ENCODE measurements at regions of chr17 and their contacts with region 1.

Region 1: GRCh38 chr17:7656958-7657609 is 6.4 kb downstream of the ATP1B2 start:
- DNase-seq: no peak
- H3K4me3 ChIP-seq: no peak overlapping the region
- H3K27ac ChIP-seq: no peak overlapping the region
- H3K4me1 ChIP-seq: no peaks in the 10 kb centered on the region
- H3K27me3 ChIP-seq: peaks cover 11% of the 10 kb centered on the region
- CTCF ChIP-seq: no peak

Region 2: DNA sequence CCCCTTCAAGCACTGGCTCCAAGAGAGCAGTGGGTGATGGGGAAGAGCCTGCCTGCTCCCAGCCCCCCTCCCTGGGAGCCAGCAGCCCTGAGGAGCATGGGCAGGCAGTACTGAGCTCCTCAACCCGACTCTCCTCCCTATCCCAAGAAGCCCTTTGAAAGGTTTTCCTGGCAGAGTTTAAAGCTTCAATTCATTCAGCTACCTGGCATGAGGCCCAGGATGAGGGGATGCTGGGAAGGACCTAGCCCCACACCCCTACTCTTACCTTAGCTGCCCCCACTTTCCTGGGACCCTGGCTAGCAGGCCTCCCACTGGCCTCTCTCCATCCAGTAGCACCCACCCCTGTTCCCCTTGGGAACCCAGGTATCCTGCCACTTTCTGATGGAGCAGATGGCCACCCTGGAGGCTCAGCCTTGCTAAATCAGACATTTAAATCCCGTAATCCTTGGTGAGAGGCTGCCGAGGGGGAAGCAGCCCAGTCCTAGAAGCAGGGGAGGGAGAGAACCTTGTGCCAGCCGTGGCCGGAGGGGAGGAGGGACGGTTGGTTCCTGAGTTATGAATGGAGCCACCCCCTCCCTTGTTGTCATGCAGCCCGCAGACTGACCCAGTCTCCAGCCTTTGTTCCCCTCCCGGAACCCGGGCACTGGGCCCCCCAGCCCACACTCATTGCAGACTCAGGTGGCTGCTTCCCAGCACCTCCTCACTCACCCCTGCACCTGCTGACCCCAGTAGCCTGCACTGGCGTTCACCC is 10.7 kb after region 1 on chr17:
- CTCF ChIA-PET with region 1: no interaction called
- POLR2A ChIA-PET with region 1: interaction called, 19 read pairs
- intact Hi-C with region 1: no loop called
- DNase-seq: no peak
- H3K4me3 ChIP-seq: no peak overlapping the region
- H3K27ac ChIP-seq: no peak overlapping the region
- H3K4me1 ChIP-seq: no peaks in the 10 kb centered on the region
- H3K27me3 ChIP-seq: no peaks in the 10 kb centered on the region
- CTCF ChIP-seq: no peak

Measured in PC-9 (cell line).